ENCODE measurements at regions of chr1 and their contacts with region 1.

Region 1: GRCh38 chr1:40040511-40041465 is at the start of gene CAP1:
- DNase-seq: peak; percentile 100
- ATAC-seq: peak; percentile 89
- H3K4me3 Mint-ChIP-seq: peak within 1 kb of the TSS; percentile 93
- H3K27ac Mint-ChIP-seq: peak within 1 kb of the TSS; percentile 99
- H3K4me1 Mint-ChIP-seq: peaks cover 61% of the 10 kb centered on the region
- H3K27me3 Mint-ChIP-seq: no peaks in the 10 kb centered on the region
- total RNA-seq, gene CAP1: 805 to 847 TPM

Region 2: GRCh38 chr1:39738622-39739366 is 302.0 kb before region 1 on chr1 and contains the start of gene PPIE:
- CTCF ChIA-PET with region 1: interaction called, 3 read pairs
- POLR2A ChIA-PET with region 1: interaction called, 11 read pairs
- DNase-seq: peak; percentile 97
- ATAC-seq: peak; percentile 97
- H3K4me3 Mint-ChIP-seq: peak within 1 kb of the TSS; percentile 92
- H3K27ac Mint-ChIP-seq: peak within 1 kb of the TSS; percentile 97
- H3K4me1 Mint-ChIP-seq: peaks cover 46% of the 10 kb centered on the region
- H3K27me3 Mint-ChIP-seq: peaks cover 10% of the 10 kb centered on the region
- total RNA-seq, gene PPIE: 60.9 to 64.7 TPM

Region 3: GRCh38 chr1:39926343-39926793 is 114.4 kb before region 1 on chr1:
- CTCF ChIA-PET with region 1: no interaction called
- POLR2A ChIA-PET with region 1: no interaction called
- DNase-seq: no peak
- ATAC-seq: no peak
- H3K4me3 Mint-ChIP-seq: no peak overlapping the region
- H3K27ac Mint-ChIP-seq: no peak overlapping the region
- H3K4me1 Mint-ChIP-seq: peaks cover 5% of the 10 kb centered on the region
- H3K27me3 Mint-ChIP-seq: no peaks in the 10 kb centered on the region

Region 4: DNA sequence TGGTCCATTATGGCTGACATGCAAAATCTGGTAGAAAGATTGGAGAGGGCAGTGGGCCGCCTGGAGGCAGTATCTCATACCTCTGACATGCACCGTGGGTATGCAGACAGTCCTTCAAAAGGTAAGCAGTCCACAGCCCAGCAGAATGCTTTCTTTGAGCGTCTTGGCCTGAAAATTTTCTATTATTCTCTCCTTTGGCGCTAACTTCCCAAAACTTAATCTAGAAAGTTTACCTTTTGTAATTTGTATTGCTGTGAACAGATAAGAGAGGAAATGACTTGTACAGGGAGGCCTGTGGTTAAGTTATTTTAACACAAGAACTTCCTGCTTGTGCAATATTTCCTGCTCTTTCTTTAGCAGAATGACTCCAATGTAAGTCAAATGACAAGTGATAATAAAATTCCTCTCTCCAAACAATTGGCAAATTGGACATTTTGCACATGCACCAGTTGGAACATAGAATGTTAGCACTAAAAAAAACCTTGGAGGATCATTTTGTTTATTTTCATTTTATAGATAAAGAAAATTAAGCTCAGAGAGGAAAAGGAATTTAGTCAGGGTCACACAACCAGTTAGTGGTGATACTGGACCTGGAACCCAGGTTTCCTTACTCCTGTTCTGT is 18.7 kb after region 1 on chr1:
- CTCF ChIA-PET with region 1: interaction called, 11 read pairs
- POLR2A ChIA-PET with region 1: interaction called, 47 read pairs
- DNase-seq: peak; percentile 61
- ATAC-seq: peak; percentile 76
- H3K4me3 Mint-ChIP-seq: peak overlapping the region; percentile 67
- H3K27ac Mint-ChIP-seq: peak overlapping the region; percentile 90
- H3K4me1 Mint-ChIP-seq: peaks cover 87% of the 10 kb centered on the region
- H3K27me3 Mint-ChIP-seq: no peaks in the 10 kb centered on the region

Region 5: DNA sequence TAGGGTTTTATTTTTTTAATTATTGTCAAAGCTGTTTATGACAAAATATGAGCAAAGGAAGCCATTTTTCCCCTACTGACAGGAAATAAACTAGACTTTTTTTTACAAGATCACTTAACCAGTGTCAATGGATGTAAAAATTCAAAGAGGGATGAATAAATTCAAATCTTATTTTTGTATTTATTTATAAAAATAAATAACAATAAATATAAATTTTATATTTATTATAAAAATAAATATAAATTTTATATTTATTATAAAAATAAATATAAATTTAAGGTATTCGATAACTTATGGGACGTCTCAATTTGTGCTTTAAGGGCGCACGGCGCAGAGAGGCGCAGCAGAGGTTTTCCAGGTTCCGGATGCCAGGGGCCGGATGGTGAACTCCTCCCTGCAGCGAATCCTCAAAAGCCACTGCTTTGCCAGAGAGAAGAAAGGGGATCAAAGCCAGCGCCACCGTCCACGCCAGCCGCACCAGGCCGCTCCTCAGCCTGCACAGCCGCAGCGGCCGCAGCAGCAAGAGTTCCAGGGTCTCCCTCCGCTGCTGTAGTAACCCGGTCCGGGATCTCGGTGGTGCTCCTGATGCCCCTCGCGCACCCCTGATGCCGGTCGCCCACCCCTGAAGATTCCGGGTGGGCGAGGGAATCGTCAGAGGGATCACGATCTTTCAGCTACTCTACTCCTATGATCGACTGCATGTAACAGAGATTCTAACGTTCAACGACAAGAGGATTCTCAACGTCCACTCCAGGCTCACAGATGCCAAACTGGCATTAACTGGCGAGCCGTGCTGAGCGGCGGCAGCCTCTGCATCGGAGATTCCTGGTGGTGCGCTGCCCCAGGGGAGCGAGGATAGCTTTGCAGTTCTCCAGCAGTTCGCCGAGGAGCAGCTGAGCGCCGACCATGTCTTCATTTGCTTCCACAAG is 91.9 kb after region 1 on chr1:
- CTCF ChIA-PET with region 1: no interaction called
- POLR2A ChIA-PET with region 1: no interaction called
- DNase-seq: no peak
- ATAC-seq: no peak
- H3K4me3 Mint-ChIP-seq: no peak overlapping the region
- H3K27ac Mint-ChIP-seq: no peak overlapping the region
- H3K4me1 Mint-ChIP-seq: peaks cover 2% of the 10 kb centered on the region
- H3K27me3 Mint-ChIP-seq: peaks cover 12% of the 10 kb centered on the region

Region 6: DNA sequence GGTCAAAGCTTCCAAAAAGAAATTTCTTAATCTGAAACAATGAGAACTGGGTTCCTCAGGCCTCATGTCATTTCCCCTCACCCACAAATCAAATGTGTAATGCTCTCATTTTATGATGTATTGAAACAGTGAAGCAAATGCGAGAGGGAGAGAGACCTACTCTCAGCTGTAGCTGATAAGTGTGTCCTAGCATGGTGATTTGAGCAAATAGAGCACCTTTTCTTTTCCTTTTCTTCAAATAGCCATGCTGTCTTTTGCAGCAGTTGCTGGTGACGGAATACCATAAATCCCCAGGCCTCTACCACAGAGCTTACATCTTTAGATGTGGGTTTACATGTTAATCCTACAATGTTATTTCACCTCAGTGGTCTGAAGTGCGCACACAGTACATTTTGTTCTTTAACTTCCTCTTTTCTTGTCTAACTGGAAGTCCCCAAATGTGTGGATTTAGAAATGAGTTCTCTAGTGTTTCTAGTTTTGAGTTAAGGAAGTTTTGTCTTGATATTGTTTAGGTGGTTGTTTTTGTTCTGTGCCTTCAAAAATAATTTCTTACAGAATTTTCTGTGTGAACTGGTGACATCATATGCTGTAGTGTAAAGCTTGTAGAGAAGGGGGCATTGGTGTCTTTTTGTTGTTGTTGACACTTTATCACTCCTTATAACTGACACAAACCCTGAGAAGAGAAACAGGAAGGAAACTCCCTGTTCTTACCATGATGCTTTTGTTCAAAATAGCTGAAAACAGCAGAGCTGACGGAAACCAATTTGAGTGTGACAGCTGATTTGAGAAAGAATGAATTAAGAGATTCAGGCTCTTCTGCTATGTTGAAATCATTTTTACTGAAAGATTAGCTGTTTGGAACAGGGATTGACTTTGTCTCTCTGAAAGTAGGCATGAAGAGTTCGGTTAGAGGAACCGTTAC is 344.9 kb after region 1 on chr1:
- CTCF ChIA-PET with region 1: no interaction called
- POLR2A ChIA-PET with region 1: interaction called, 23 read pairs
- DNase-seq: peak; percentile 84
- ATAC-seq: peak; percentile 68
- H3K4me3 Mint-ChIP-seq: peak overlapping the region; percentile 79
- H3K27ac Mint-ChIP-seq: peak overlapping the region; percentile 99
- H3K4me1 Mint-ChIP-seq: peaks cover 94% of the 10 kb centered on the region
- H3K27me3 Mint-ChIP-seq: no peaks in the 10 kb centered on the region